ENCODE measurements at regions of chr1 and their contacts with region 1.

Region 1: DNA sequence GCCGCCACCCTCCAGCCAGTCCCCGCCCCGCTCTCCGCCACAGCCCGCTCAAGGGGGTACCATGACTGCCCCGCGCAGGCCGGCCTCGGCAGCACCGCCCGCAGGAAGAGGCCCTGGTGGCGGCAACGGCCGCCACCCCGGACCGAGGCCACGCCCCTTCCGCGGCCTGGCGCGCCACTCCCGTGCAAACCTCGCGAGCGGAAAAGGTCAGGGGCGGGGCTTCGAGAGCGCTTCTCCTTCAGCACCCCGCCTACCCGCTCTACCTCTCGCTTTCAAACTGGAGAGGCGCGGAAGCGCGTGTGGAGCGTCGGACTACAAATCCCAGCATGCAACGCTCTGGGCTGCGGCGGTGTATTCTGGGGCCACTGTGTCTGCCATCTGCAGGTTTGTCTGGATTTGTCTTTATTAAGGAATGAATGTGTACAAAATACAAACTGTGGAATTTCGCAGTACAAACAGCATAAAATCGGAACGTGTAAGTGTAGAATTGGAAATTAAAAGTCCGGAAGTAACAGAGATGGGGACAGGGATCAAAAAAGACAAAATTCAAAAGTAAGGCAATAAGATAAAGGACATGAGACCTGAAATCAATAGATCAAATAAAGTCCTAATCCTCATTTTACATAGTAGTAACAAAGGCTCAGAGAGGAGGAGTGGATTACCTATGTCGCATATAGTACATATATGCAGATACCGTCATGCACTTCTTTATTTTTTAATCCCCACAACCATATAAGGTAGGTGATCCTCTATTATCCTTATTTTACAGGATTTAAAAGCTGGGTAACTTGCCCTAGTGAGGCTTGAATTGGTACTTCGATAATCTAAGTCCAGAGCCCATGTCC is 464 bp upstream of the ADSS2 start:
- DNase-seq: peak; percentile 100
- H3K4me3 ChIP-seq: peak overlapping the region in 3 of 4 donors; percentile 81 to 94 (median 86)
- H3K27ac ChIP-seq: peak overlapping the region; percentile 96 to 99 (median 98)
- H3K4me1 ChIP-seq: peaks cover 7 to 39% (median 21%) of the 10 kb centered on the region in 4 donors
- H3K27me3 ChIP-seq: no peaks in the 10 kb centered on the region
- CTCF ChIP-seq: peak; percentile 23 to 62 (median 45)
- EP300 ChIP-seq: no peak
- POLR2A ChIP-seq: no peak

Region 2: DNA sequence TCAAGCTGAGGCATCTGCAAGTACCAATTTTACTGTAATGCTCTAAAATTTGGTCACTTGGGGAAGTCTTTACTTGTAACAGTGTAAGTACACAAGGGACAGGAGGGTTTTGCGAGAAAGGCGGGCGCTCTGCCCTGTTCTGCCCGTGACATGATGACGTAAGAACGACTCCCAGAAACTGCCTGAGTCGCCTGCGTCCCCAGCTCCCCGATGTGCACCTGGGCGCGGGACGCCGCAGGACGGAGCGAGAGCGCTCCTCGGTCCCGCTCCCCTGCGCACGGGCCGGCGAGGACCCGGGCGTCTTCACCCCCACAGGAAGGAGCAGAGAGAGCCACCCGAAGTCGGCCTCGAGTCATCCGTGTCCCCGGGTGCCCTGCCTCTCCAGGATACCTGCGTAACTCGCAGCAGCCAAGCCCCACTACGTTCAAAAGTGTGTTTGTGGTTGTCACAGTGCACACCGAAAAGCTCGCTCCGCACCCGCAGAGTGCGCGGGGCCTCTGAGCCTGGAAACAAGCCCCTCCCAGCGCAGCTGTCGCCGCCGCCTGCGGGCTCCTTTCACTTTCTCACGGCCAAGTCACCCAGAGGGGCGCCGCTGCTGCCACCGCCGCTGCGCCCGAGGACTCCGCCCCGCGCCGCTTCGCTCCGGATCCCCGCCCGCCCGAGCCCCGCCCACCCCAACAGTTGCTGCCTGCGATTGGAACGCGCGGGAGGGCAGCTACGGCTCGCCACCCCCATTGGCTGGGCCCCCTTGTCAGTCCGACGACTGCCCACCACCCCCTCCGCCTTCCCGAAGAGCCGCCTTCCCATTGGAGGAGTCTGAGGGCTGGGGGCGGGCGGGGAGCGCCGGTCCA is 404.3 kb before region 1 on chr1:
- in situ Hi-C with region 1: loop called in 1 of 4 experiments (anchors 25 kb)
- intact Hi-C with region 1: no loop called
- DNase-seq: peak; percentile 99
- H3K4me3 ChIP-seq: peak overlapping the region; percentile 63 to 90 (median 82)
- H3K27ac ChIP-seq: peak overlapping the region; percentile 95 to 100 (median 96)
- H3K4me1 ChIP-seq: peaks cover 0 to 39% (median 17%) of the 10 kb centered on the region in 4 donors
- H3K27me3 ChIP-seq: no peaks in the 10 kb centered on the region
- CTCF ChIP-seq: no peak
- EP300 ChIP-seq: no peak
- POLR2A ChIP-seq: peak; percentile 99

Region 3: GRCh38 chr1:244319283-244320132 is 132.7 kb before region 1 on chr1:
- in situ Hi-C with region 1: loop called in 1 of 4 experiments (anchors 10 kb)
- intact Hi-C with region 1: no loop called
- DNase-seq: no peak
- H3K4me3 ChIP-seq: no peak overlapping the region
- H3K27ac ChIP-seq: peak overlapping the region; percentile 20 to 65 (median 36)
- H3K4me1 ChIP-seq: peaks cover 0 to 29% (median 7%) of the 10 kb centered on the region in 4 donors
- H3K27me3 ChIP-seq: no peaks in the 10 kb centered on the region
- CTCF ChIP-seq: no peak
- EP300 ChIP-seq: no peak
- POLR2A ChIP-seq: no peak

Region 4: DNA sequence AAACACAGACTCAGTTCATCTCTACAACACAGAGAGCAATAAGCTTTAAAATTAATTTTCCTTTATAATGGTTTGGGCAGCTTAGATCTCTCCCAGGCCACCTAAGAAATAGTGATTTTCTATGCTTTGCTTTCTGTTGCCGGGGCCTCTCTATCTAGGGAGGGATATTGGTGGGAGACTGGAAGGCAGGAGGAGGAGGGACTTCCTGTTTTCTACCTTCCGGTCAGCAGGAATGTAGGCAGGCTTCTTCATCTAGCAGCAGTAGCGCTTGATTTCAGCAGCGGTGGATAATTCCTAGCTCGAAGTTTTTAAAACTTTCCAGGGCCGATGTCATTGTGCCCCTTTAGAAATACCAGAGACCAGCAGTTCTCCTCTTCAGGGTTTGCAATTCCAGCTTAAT is 195.6 kb after region 1 on chr1:
- in situ Hi-C with region 1: loop called in 1 of 4 experiments (anchors 10 kb)
- intact Hi-C with region 1: loop called (anchors 10 kb)
- DNase-seq: no peak
- H3K4me3 ChIP-seq: no peak overlapping the region
- H3K27ac ChIP-seq: no peak overlapping the region
- H3K4me1 ChIP-seq: peaks cover 0 to 4% (median 0%) of the 10 kb centered on the region in 4 donors
- H3K27me3 ChIP-seq: no peaks in the 10 kb centered on the region
- CTCF ChIP-seq: no peak
- EP300 ChIP-seq: no peak
- POLR2A ChIP-seq: no peak

Region 5: GRCh38 chr1:244652699-244653466 is 200.7 kb after region 1 on chr1 and contains the start of gene DESI2:
- in situ Hi-C with region 1: loop called in 1 of 4 experiments (anchors 10 kb)
- intact Hi-C with region 1: loop called (anchors 10 kb)
- DNase-seq: peak; percentile 99
- H3K4me3 ChIP-seq: peak within 1 kb of the TSS; percentile 60 to 91 (median 80)
- H3K27ac ChIP-seq: peak within 1 kb of the TSS; percentile 96 to 99 (median 98)
- H3K4me1 ChIP-seq: peaks cover 10 to 43% (median 28%) of the 10 kb centered on the region in 4 donors
- H3K27me3 ChIP-seq: no peaks in the 10 kb centered on the region
- CTCF ChIP-seq: peak; percentile 28 to 73 (median 44)
- EP300 ChIP-seq: no peak
- POLR2A ChIP-seq: peak; percentile 94
- total RNA-seq, gene DESI2: 18.3 to 41.6 (median 30.6) TPM

Region 6: DNA sequence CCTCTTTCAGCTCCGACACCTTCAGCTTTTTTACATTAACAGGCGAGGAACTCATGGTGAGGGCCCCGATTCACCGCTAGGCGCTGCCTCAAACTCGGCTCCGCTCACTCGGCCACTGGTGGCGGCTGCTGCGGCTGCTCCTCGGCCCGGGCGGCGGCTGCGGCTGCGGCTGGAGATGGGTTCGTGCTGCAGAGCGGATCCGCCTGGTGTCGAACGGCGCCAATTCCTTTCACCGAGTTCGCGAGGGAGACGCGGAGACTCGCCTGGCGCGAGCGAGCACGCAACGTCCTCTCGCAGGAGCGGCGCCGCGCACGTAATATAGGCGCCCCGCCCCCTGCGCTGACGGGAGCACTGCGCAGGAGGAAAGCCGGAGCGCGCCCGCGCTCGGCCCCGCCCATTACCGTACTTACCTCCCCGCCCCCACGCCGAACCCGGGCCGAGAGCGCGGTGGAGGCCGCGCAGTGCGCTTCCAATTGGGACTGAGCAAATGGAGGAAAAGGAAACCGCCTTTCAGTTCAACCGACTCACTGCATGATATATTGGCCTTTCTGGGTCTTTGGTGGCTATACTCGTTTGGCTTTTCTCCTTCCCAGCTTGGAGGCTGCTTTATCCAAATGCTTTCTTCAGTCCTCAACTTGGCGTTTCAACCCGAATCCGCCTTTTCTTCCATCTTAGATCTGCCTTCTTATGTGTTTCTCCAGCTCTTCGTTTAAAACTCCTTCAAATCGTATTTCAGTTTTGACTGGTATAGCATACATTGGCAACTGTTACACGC is 412.3 kb after region 1 on chr1 and contains the start of gene HNRNPU:
- in situ Hi-C with region 1: no loop called
- intact Hi-C with region 1: loop called (anchors 5 kb)
- DNase-seq: peak; percentile 98
- H3K4me3 ChIP-seq: peak within 1 kb of the TSS; percentile 93 to 100 (median 98)
- H3K27ac ChIP-seq: peak within 1 kb of the TSS; percentile 100
- H3K4me1 ChIP-seq: peaks cover 18 to 40% (median 28%) of the 10 kb centered on the region in 4 donors
- H3K27me3 ChIP-seq: no peaks in the 10 kb centered on the region
- CTCF ChIP-seq: peak; percentile 38 to 83 (median 41)
- EP300 ChIP-seq: peak; percentile 46
- POLR2A ChIP-seq: peak; percentile 99
- total RNA-seq, gene HNRNPU: 223 to 364 (median 237) TPM

Measured in transverse colon (tissue), 4 donors.